ENCODE measurements at regions of chr9 and their contacts with region 1.

Region 1: GRCh38 chr9:13279284-13280141 is at the start of gene MPDZ:
- DNase-seq: peak in 1 of 2 donors; percentile 85
- H3K4me3 ChIP-seq: peak within 1 kb of the TSS; percentile 72 to 86
- H3K27ac ChIP-seq: peak within 1 kb of the TSS; percentile 86 to 93
- H3K4me1 ChIP-seq: peaks cover 5 to 8% of the 10 kb centered on the region in 2 donors
- H3K27me3 ChIP-seq: no peaks in the 10 kb centered on the region
- CTCF ChIP-seq: peak in 1 of 3 experiments; percentile 25
- total RNA-seq, gene MPDZ: 46.2 TPM

Region 2: GRCh38 chr9:12684923-12685468 is 594.5 kb before region 1 on chr9:
- intact Hi-C with region 1: no loop called
- DNase-seq: no peak
- H3K4me3 ChIP-seq: no peak overlapping the region
- H3K27ac ChIP-seq: no peak overlapping the region
- H3K4me1 ChIP-seq: no peaks in the 10 kb centered on the region
- H3K27me3 ChIP-seq: no peaks in the 10 kb centered on the region
- CTCF ChIP-seq: no peak

Region 3: GRCh38 chr9:13109781-13110180 is 169.7 kb before region 1 on chr9:
- intact Hi-C with region 1: loop called (anchors 10 kb)
- DNase-seq: no peak
- H3K4me3 ChIP-seq: no peak overlapping the region
- H3K27ac ChIP-seq: no peak overlapping the region
- H3K4me1 ChIP-seq: peaks cover 3 to 10% of the 10 kb centered on the region in 2 donors
- H3K27me3 ChIP-seq: no peaks in the 10 kb centered on the region
- CTCF ChIP-seq: no peak

Region 4: DNA sequence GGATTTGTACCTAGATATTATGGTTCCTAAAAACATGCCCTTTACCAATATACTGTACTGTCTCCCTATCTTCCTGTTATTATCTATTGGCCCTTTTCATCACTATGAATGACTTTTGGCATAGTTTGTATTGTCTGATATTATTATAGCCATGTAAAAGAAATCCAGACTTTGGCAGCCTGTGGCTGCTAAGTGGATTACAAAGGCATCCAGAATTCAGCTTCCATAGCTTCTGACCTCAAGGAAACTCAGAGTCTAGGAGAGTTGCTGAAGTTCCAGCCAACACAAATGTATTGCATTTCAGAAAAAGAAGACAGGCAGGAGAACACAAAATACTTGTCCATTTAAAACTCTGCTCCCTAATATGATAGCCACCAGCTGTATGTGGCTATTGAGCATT is 319.2 kb after region 1 on chr9:
- intact Hi-C with region 1: no loop called
- DNase-seq: no peak
- H3K4me3 ChIP-seq: no peak overlapping the region
- H3K27ac ChIP-seq: no peak overlapping the region
- H3K4me1 ChIP-seq: no peaks in the 10 kb centered on the region
- H3K27me3 ChIP-seq: no peaks in the 10 kb centered on the region
- CTCF ChIP-seq: no peak

Measured in ascending aorta (tissue), 2 donors.